Sciatic nerve (tissue), 2 donors: ENCODE measurements at regions of chr9 and their contacts with region 1.

Region 1: GRCh38 chr9:137236238-137236935 is 4.7 kb upstream of the TUBB4B start:
- DNase-seq: peak; percentile 87
- ATAC-seq: peak; percentile 33

Region 2: GRCh38 chr9:137123468-137123837 is 112.9 kb before region 1 on chr9:
- intact Hi-C with region 1: loop called (anchors 5 kb)
- DNase-seq: no peak
- ATAC-seq: no peak

Region 3: GRCh38 chr9:137188490-137189296 is 47.7 kb before region 1 on chr9 and contains the starts of genes ANAPC2 and SSNA1:
- intact Hi-C with region 1: loop called (anchors 10 kb)
- DNase-seq: peak; percentile 96
- ATAC-seq: peak; percentile 94
- total RNA-seq, gene ANAPC2: 52.8 TPM
- total RNA-seq, gene SSNA1: 27.6 TPM